Transverse colon (tissue), 4 donors: ENCODE measurements at regions of chr16 and their contacts with region 1.

Region 1: DNA sequence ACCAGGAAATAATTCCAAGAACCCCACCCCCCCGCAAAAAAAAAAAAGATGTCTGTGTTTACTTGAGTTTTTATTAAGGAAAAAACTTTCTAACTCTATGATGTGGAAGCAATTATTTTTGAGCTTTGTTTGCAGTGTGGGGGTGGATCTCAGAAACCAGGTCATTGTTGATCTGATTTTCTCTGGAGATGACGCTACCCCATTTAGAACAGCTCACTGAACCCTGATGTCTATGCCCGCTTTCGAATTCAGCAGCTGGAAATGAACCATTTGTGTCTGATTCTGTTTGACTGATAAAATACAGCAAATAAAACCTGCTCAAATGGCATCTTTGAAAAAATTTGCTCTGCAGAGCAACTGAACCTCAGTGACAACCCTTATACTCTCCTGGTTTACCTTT is 368.6 kb downstream of the GRIN2A start:
- DNase-seq: no peak
- H3K4me3 ChIP-seq: no peak overlapping the region
- H3K27ac ChIP-seq: no peak overlapping the region
- H3K4me1 ChIP-seq: no peaks in the 10 kb centered on the region
- H3K27me3 ChIP-seq: no peaks in the 10 kb centered on the region
- CTCF ChIP-seq: no peak
- EP300 ChIP-seq: no peak
- POLR2A ChIP-seq: no peak

Region 2: GRCh38 chr16:9864461-9864860 is 50.8 kb after region 1 on chr16:
- in situ Hi-C with region 1: no loop called
- intact Hi-C with region 1: loop called (anchors 2 kb)
- DNase-seq: no peak
- H3K4me3 ChIP-seq: no peak overlapping the region
- H3K27ac ChIP-seq: no peak overlapping the region
- H3K4me1 ChIP-seq: no peaks in the 10 kb centered on the region
- H3K27me3 ChIP-seq: no peaks in the 10 kb centered on the region
- CTCF ChIP-seq: no peak
- EP300 ChIP-seq: no peak
- POLR2A ChIP-seq: no peak

Region 3: DNA sequence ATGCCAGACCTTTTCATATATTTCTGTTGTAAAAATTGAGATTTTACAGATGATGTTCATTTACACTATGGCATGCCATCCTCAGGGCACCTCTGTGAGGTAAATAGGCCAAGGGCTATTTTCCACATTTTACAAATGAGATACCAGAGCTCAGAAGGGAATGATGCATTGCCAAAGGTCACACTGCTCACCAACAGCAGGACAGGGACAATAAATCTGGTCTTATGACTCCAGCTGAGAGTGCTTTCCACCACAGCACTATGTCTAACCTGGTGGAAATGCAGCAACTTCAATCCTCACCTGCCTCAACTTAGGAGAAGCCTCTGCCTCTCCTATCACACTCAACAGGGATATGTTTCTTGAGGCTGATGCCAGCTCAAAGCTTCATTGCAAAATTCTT is 328.0 kb after region 1 on chr16:
- in situ Hi-C with region 1: no loop called
- intact Hi-C with region 1: loop called (anchors 5 kb)
- DNase-seq: no peak
- H3K4me3 ChIP-seq: no peak overlapping the region
- H3K27ac ChIP-seq: no peak overlapping the region
- H3K4me1 ChIP-seq: no peaks in the 10 kb centered on the region
- H3K27me3 ChIP-seq: no peaks in the 10 kb centered on the region
- CTCF ChIP-seq: no peak
- EP300 ChIP-seq: no peak
- POLR2A ChIP-seq: no peak